Right ventricle myocardium inferior (tissue), 1 donor: ENCODE measurements at regions of chr14 and their contacts with region 1.

Region 1: GRCh38 chr14:59306775-59307174 is 118.3 kb downstream of the DAAM1 start:
- DNase-seq: no peak
- ATAC-seq: no peak

Region 2: GRCh38 chr14:59265808-59266207 is 41.0 kb before region 1 on chr14:
- intact Hi-C with region 1: loop called (anchors 5 kb)
- DNase-seq: no peak
- ATAC-seq: no peak